Mammary epithelial cell (primary cell): ENCODE measurements at regions of chr14 and their contacts with region 1.

Region 1: DNA sequence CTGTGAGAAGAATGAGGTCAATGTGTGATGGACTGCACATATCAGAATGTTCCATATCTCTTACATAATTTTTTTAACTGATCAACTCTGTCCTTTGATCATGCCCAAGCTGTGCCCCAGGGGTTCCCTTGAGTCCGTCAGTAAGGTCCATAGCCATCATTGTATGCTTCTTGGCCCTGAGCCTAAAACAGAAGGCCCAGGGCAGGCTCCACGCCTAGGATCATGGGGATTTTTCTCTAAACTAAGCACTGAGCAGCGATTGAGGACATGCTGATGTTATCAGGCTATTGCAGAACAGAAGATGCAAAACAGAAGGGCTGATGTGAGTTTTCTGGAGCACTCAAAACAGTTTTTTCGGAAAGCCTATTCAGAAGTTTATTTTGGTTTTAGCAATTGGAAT is 20.9 kb downstream of the RNASE9 start:
- DNase-seq: no peak
- H3K4me3 ChIP-seq: no peak overlapping the region
- H3K27ac ChIP-seq: no peak overlapping the region
- H3K4me1 ChIP-seq: no peaks in the 10 kb centered on the region
- H3K27me3 ChIP-seq: no peaks in the 10 kb centered on the region
- CTCF ChIP-seq: no peak

Region 2: DNA sequence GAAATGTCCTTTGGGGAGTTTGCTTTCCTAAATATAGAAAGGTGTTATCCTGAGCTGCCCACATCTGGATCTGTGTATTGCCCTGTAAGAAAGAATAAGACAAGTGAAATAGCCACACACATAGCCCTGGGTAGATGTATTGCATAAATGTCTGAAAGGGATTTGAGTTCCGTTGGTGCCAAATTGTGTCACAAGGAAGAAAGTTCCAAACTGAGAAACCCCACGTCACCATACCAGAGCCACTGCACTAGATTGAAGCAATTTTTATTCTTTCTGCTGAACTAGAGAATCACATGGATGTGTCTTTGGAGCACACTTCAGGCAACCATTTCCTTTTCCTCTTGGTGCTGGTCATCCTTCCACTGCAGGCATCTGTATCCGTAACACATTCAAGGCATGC is 15.9 kb after region 1 on chr14:
- CTCF ChIA-PET with region 1: no interaction called
- dilution Hi-C with region 1: no loop called
- in situ Hi-C with region 1: no loop called
- intact Hi-C with region 1: loop called (anchors 1 kb)
- DNase-seq: no peak
- H3K4me3 ChIP-seq: no peak overlapping the region
- H3K27ac ChIP-seq: no peak overlapping the region
- H3K4me1 ChIP-seq: no peaks in the 10 kb centered on the region
- H3K27me3 ChIP-seq: peaks cover 3% of the 10 kb centered on the region
- CTCF ChIP-seq: no peak